ENCODE measurements at regions of chr6 and their contacts with region 1.

Region 1: GRCh38 chr6:168150551-168151320 is 71.7 kb upstream of the FRMD1 start:
- DNase-seq: peak; percentile 17 to 21
- H3K4me3 ChIP-seq: no peak overlapping the region
- H3K27ac ChIP-seq: no peak overlapping the region
- H3K4me1 ChIP-seq: peaks cover 3% of the 10 kb centered on the region in 2 donors
- H3K27me3 ChIP-seq: no peaks in the 10 kb centered on the region
- CTCF ChIP-seq: peak in 4 of 6 experiments; percentile 58 to 81 (median 66)
- POLR2A ChIP-seq: no peak

Region 2: GRCh38 chr6:168355716-168356449 is 205.1 kb after region 1 on chr6:
- intact Hi-C with region 1: loop called (anchors 5 kb)
- DNase-seq: peak; percentile 54 to 56
- H3K4me3 ChIP-seq: no peak overlapping the region
- H3K27ac ChIP-seq: no peak overlapping the region
- H3K4me1 ChIP-seq: peaks cover 0 to 5% of the 10 kb centered on the region in 2 donors
- H3K27me3 ChIP-seq: no peaks in the 10 kb centered on the region
- CTCF ChIP-seq: peak; percentile 27 to 76 (median 64)
- POLR2A ChIP-seq: no peak

Measured in thyroid gland (tissue), 4 donors.